Activated CD8-positive, alpha-beta T cell treated with anti-CD3 and anti-CD28 coated beads, Interleukin-2, amount 10 ng/mL, durations not matched to agents 7 days and 5 days (primary cell): ENCODE measurements at regions of chr15 and their contacts with region 1.

Region 1: DNA sequence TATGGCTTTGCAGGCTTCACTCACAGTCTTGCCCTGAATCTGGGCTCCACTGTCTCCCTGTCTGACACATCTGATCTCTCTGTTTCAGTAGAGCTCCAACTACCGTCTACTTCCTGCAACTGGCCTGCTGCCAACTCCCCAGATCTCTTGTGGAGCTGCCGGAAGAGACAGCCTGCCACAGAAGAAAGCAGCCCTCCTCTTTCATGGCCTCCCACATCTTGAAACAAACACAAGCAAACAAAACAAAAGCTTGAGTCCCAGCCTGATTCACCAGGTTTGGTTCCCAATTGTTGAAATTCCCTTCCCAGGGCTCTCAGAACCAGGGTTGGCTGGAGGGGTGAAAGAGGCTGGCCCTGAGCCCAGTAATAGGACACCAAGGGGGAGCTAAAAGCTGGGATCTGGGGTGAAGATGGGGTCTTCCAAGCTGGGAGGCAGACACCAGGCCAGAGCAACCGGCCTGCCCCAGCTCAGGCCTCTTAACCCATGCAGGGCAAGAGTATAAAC is 55.3 kb upstream of the CA12 start:
- DNase-seq: peak; percentile 87
- ATAC-seq: peak; percentile 98
- H3K4me3 Mint-ChIP-seq: peak overlapping the region; percentile 29
- H3K27ac Mint-ChIP-seq: peak overlapping the region; percentile 94
- H3K4me1 Mint-ChIP-seq: peaks cover 29% of the 10 kb centered on the region
- H3K27me3 Mint-ChIP-seq: no peaks in the 10 kb centered on the region

Region 2: DNA sequence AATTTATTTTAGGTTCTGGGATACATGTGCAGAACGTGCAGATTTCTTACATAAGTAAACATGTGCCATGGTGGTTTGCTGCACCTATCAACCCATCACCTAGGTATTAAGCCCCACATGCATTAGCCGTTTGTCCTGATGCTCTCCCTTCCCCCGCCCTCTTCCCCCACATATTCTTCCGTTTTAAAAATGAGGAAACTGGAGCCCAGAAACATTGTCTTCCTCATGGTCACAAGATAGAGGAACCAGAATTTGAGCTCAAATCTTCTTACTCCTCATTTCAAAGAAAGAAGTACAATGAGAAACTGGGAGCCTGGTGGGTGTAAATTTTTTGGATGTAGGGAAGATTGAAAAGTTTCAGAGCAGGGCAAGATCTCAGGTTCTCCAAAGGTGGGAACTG is 11.3 kb after region 1 on chr15:
- CTCF ChIA-PET with region 1: interaction called, 16 read pairs
- POLR2A ChIA-PET with region 1: interaction called, 5 read pairs
- DNase-seq: no peak
- ATAC-seq: no peak
- H3K4me3 Mint-ChIP-seq: no peak overlapping the region
- H3K27ac Mint-ChIP-seq: no peak overlapping the region
- H3K4me1 Mint-ChIP-seq: peaks cover 17% of the 10 kb centered on the region
- H3K27me3 Mint-ChIP-seq: no peaks in the 10 kb centered on the region

Region 3: GRCh38 chr15:63531586-63531985 is 94.7 kb after region 1 on chr15:
- CTCF ChIA-PET with region 1: no interaction called
- POLR2A ChIA-PET with region 1: no interaction called
- DNase-seq: no peak
- ATAC-seq: no peak
- H3K4me3 Mint-ChIP-seq: no peak overlapping the region
- H3K27ac Mint-ChIP-seq: no peak overlapping the region
- H3K4me1 Mint-ChIP-seq: peaks cover 46% of the 10 kb centered on the region
- H3K27me3 Mint-ChIP-seq: no peaks in the 10 kb centered on the region